Activated naive CD4-positive, alpha-beta T cell treated with anti-CD3 and anti-CD28 coated beads for 36 hours (primary cell): ENCODE measurements at regions of chr2 and their contacts with region 1.

Region 1: GRCh38 chr2:233061591-233062450 is 1.7 kb downstream of the INPP5D start:
- DNase-seq: peak; percentile 76
- H3K4me3 Mint-ChIP-seq: peak overlapping the region; percentile 98
- H3K27ac Mint-ChIP-seq: peak overlapping the region; percentile 98
- H3K4me1 Mint-ChIP-seq: peaks cover 40% of the 10 kb centered on the region
- H3K27me3 Mint-ChIP-seq: no peaks in the 10 kb centered on the region

Region 2: DNA sequence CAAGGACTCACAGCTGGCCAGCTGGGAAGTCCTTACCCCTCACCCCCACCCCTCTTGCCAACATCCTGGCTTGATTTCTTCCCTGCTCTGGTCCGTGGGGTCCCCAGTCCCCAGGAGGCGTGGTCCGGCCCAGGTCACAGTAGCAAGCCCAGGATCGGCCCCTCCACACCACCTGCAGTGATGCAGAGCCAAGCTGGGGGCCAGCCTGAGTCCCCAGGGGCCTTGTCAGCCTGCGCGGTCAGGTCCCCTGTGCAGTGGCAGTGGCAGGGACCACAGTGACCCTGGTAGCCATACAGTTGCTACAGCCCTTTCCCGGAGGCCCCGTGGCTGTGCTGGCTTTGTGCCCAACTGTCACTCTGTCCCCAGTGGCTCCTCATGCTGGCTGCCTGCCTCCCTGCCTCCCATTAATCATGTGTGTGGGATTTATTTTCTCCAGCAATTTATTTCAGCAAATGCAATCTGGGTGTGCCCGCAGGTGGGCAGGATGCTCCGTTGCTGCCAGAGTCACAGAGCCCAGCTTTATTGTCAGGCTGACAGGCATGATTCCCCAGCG is 550.4 kb before region 1 on chr2:
- CTCF ChIA-PET with region 1: no interaction called
- intact Hi-C with region 1: no loop called
- DNase-seq: no peak
- H3K4me3 Mint-ChIP-seq: no peak overlapping the region
- H3K27ac Mint-ChIP-seq: no peak overlapping the region
- H3K4me1 Mint-ChIP-seq: no peaks in the 10 kb centered on the region
- H3K27me3 Mint-ChIP-seq: peaks cover 2% of the 10 kb centered on the region

Region 3: DNA sequence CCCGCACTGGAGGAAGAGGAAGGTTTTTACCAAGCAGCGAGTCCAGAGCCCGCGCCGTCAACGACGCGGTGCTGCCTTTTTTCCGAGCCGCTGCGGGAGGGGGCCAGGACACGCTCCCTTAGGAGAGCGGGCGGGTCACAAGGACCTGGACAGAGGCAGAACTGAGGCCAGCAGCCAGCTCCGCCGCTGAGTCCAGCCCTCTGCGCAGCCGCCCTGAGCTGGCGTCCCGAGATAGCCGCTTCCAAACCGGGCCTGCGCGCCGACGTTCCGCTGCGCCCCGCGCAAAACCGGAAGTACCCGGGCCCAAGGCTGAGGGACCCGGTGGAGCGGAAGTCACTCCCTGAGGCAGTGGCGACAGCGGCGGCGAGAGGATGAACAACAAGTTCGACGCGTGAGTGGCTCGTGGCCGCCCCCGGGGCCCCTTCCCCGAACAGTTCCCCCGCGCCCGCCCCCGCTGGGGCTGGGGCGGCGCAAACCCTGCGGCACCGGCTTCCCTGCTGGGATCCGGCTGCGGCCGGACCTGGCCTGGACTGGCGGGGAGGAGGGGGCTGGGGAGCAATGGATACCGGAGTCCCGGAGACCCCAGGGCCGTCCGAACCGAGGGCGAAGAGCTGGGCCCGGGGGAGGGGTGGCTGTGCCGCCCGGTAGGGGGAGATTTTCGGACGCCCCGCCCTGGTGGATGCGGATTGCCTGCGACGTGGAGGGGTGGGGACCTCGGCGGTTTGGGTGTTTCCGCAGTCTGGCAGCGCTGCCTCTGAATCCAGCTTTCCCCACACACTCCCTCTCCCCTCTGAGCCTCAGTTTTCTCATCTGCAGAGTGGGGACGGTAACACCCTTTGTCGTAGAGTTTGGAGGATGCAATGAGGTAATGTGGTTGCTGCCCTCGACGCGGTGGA is 511.2 kb before region 1 on chr2 and contains the starts of genes EIF4E2 and TIGD1:
- CTCF ChIA-PET with region 1: no interaction called
- intact Hi-C with region 1: loop called (anchors 5 kb)
- DNase-seq: peak; percentile 95
- H3K4me3 Mint-ChIP-seq: peak within 1 kb of the TSS; percentile 99
- H3K27ac Mint-ChIP-seq: peak within 1 kb of the TSS; percentile 98
- H3K4me1 Mint-ChIP-seq: peaks cover 66% of the 10 kb centered on the region
- H3K27me3 Mint-ChIP-seq: no peaks in the 10 kb centered on the region
- total RNA-seq, gene EIF4E2: 46.6 to 54.1 TPM
- total RNA-seq, gene TIGD1: 7.7 to 8.3 TPM

Region 4: DNA sequence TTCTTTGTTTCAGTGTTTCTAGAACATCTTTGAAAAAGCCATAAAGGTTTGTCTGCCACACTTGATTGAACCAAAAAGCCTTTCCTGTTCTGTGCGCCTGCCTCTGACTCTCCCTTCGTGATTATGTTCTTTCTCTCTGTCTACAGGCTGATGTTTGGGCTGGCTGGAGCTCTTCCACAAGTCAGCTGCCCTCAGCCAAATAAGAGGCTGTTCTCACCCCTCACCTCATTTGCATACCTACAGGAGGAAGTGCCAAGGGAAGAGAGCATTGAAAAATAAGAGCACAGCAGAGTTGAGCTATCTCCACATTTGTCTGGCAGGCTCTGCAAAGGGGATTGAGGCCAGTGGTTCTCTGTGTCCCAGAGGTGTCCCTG is 14.1 kb after region 1 on chr2:
- CTCF ChIA-PET with region 1: interaction called, 41 read pairs
- intact Hi-C with region 1: loop called (anchors 1 kb)
- DNase-seq: peak; percentile 49
- H3K4me3 Mint-ChIP-seq: no peak overlapping the region
- H3K27ac Mint-ChIP-seq: no peak overlapping the region
- H3K4me1 Mint-ChIP-seq: peaks cover 35% of the 10 kb centered on the region
- H3K27me3 Mint-ChIP-seq: no peaks in the 10 kb centered on the region

Region 5: GRCh38 chr2:233142355-233142897 is 80.6 kb after region 1 on chr2:
- CTCF ChIA-PET with region 1: no interaction called
- intact Hi-C with region 1: loop called (anchors 2 kb)
- DNase-seq: peak; percentile 28
- H3K4me3 Mint-ChIP-seq: no peak overlapping the region
- H3K27ac Mint-ChIP-seq: peak overlapping the region; percentile 73
- H3K4me1 Mint-ChIP-seq: peaks cover 27% of the 10 kb centered on the region
- H3K27me3 Mint-ChIP-seq: no peaks in the 10 kb centered on the region

Region 6: DNA sequence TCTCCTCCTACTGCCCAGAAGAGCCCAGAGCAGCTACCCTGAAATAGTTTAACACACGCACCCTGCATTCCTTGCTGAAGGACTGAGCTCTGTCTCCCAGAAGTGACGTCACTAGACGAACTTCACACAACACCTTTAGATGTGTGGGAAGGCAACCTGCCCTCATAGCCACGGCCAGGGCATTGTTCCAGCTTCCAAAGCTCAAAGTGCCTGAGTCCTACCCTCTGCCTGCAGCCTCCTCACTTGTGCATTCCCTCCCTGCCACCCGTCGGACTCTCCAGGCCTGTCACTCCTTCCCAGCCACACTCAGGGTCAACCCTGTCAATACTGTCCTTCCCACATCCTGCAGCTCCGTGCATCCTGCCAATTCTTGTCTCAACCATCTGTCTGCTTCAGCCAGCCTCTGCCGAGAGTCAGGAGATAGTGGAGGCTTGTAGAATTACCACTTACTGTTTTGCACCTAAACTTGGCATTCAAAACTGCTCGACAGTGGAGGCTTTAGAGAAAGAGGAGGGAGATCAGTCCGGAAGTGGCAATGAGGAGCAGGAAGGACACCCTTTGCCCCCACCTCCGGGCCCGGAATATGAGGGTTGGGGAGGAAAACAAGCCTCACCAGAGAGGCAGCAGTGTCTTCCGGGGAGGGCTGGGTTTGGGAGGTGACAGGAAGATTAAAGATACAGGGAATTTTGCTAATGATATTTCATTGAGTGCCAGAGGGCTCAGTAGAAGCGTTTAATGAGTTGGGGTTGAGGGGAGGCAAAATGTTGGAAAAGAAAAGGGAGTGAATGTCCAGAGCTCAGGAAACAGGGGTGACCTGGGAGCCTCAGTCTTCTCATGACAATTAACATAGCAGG is 117.4 kb after region 1 on chr2:
- CTCF ChIA-PET with region 1: no interaction called
- intact Hi-C with region 1: no loop called
- DNase-seq: no peak
- H3K4me3 Mint-ChIP-seq: no peak overlapping the region
- H3K27ac Mint-ChIP-seq: no peak overlapping the region
- H3K4me1 Mint-ChIP-seq: no peaks in the 10 kb centered on the region
- H3K27me3 Mint-ChIP-seq: no peaks in the 10 kb centered on the region

Region 7: DNA sequence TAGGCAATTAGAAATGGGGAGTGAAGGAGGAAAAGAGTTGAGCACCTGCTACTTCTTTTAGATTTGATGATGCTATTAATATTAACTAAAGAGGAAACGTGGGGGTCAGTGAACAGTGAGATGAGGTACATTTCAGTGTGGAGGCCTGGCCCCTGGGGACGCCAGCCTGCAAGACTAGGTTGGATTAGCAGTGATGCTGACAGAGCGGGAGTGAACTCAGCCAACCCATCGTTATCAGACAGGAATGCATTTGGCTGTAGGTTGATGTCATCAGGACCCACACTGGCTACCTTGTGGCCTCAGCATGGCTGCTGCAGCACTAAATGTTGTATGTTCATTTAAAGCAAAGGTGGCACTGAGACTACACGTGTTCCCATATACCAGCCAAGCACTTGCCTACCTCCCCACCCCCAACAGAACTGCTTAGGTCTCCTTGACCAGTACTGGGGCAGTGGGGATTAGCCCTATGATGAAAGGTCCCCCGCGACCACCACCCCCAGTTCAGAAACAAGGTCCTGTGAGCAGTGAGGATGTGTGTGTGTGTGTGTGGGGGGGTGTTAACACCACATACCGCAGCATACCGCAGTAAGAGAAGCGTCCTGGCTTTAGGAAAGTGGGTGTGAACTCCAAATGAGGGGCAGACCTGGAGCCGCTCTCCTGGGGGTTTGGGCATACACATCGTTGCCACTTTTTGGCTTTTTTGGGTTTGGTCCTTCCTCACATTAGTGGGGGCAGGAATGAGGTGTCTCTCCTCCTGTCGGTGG is 318.5 kb after region 1 on chr2:
- CTCF ChIA-PET with region 1: no interaction called
- intact Hi-C with region 1: no loop called
- DNase-seq: no peak
- H3K4me3 Mint-ChIP-seq: no peak overlapping the region
- H3K27ac Mint-ChIP-seq: no peak overlapping the region
- H3K4me1 Mint-ChIP-seq: peaks cover 62% of the 10 kb centered on the region
- H3K27me3 Mint-ChIP-seq: no peaks in the 10 kb centered on the region

Region 8: GRCh38 chr2:233566141-233566960 is 504.5 kb after region 1 on chr2 and contains the start of gene USP40:
- CTCF ChIA-PET with region 1: no interaction called
- intact Hi-C with region 1: loop called (anchors 10 kb)
- DNase-seq: peak; percentile 75
- H3K4me3 Mint-ChIP-seq: peak within 1 kb of the TSS; percentile 92
- H3K27ac Mint-ChIP-seq: peak within 1 kb of the TSS; percentile 92
- H3K4me1 Mint-ChIP-seq: peaks cover 9% of the 10 kb centered on the region
- H3K27me3 Mint-ChIP-seq: no peaks in the 10 kb centered on the region
- total RNA-seq, gene USP40: 15.3 to 17.5 TPM